AG04449 (cell line): ENCODE measurements at regions of chr11 and their contacts with region 1.

Region 1: GRCh38 chr11:44621140-44621681 is 55.7 kb downstream of the CD82 start:
- DNase-seq: no peak
- H3K4me3 ChIP-seq: peak overlapping the region; percentile 37
- CTCF ChIP-seq: peak; percentile 98

Region 2: DNA sequence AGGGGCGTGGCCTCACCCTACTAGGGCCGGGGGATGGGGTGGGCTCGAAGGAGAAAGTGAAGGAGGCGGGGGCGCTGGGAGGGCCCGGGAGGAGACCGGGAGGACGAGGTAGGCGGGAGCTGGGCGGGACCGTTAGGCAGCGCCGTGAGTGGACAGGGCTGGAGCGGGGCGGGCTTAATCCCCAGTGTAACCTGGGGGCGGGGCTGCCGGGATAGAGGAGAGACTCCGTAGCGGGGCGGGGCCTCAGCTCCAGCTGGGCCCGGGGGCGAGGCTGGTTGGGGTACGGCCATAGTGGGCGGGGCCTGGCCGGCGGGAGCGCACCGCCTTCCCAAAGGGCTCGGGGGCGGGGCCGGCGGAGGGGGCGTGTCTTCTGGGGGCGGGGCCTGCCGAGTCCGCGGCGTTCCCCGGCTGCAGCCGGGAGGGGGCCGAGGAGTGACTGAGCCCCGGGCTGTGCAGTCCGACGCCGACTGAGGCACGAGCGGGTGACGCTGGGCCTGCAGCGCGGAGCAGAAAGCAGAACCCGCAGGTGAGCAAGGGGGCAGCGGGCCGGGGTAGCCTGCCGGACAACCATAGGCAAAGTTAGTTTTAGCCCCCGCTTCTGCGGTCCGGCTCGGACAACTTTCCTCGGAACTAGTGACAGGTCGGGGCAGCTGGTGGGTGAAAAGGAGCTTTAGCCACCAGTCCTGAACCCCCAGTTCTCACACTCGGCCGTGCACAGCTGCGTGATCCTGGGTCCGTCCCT is 55.8 kb before region 1 on chr11 and contains the start of gene CD82:
- CTCF ChIA-PET with region 1: interaction called, 995 read pairs
- POLR2A ChIA-PET with region 1: no interaction called
- DNase-seq: peak; percentile 91
- H3K4me3 ChIP-seq: peak within 1 kb of the TSS; percentile 69
- CTCF ChIP-seq: peak; percentile 59

Region 3: GRCh38 chr11:44578279-44578678 is 42.9 kb before region 1 on chr11:
- CTCF ChIA-PET with region 1: interaction called, 18 read pairs
- POLR2A ChIA-PET with region 1: no interaction called
- DNase-seq: no peak
- H3K4me3 ChIP-seq: no peak overlapping the region
- CTCF ChIP-seq: no peak

Region 4: GRCh38 chr11:44601471-44602370 is 19.5 kb before region 1 on chr11:
- CTCF ChIA-PET with region 1: interaction called, 20 read pairs
- POLR2A ChIA-PET with region 1: no interaction called
- DNase-seq: no peak
- H3K4me3 ChIP-seq: no peak overlapping the region
- CTCF ChIP-seq: no peak

Region 5: GRCh38 chr11:44893846-44894617 is 272.8 kb after region 1 on chr11:
- CTCF ChIA-PET with region 1: interaction called, 659 read pairs
- POLR2A ChIA-PET with region 1: no interaction called
- DNase-seq: no peak
- H3K4me3 ChIP-seq: no peak overlapping the region
- CTCF ChIP-seq: peak; percentile 99

Region 6: DNA sequence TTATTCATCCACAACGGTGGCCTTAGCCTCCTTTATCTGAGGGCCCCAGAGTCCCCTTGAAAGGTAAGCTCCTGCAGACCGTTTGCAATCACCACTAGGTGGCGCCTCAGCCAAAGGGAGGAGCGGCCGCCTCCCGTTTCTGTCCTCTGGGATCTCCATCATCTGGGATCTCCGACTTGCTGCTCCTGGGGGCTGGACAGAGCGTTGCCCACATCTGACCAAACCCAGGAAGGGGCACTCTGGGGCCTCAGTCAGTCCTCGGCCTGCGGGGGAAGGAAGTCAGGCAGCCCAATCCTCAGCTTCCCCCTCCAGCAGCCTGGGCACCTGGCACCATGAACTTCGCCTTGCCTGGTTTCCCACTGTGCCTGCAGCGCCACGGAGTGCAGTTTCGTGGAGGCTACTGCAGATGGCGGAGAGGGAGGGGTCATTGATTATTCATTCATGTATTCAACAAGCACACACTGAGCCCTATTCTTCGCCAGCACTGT is 306.0 kb after region 1 on chr11:
- CTCF ChIA-PET with region 1: interaction called, 57 read pairs
- POLR2A ChIA-PET with region 1: no interaction called
- DNase-seq: no peak
- H3K4me3 ChIP-seq: no peak overlapping the region
- CTCF ChIP-seq: peak; percentile 89

Region 7: DNA sequence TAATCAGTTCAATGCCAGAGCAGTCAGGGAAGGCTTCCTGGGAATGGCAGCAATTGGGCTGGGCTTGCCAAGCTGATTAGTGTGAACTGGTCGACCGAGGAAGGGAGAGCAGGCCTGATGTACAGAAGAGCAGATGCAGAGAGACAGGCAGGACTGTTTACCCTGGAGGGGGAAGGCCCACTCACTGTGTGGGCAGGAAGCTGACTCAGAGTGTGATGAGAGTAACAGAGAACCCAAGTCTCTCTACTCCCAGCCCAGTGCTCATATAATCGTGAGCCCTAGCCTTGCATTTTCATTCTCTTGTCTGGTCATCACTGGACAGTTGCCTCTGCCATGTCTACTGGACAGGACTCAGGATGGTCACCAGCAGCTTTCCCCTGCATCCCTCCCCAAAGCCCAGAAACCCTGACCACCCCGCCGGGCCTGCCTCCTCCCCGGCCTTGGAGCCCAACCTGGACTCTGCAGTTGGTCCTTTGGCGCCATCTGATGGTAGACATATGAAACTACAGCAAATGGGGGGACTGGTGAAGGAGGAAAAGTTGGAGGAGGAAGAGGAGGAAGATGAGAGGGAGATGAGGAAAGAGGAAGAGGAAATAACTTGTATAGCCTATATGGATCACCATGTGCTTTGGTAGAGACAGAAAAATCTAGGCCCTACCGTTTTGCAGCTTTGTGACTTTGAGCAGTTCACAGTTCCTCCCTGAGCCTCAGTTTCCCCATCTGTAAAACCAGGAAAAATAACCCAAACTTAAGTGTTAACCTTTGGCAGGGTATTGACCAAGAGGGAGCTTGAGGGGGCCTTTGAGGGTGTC is 481.8 kb after region 1 on chr11:
- CTCF ChIA-PET with region 1: interaction called, 42 read pairs
- POLR2A ChIA-PET with region 1: no interaction called
- DNase-seq: no peak
- H3K4me3 ChIP-seq: peak overlapping the region; percentile 29; the same call in 1 of the 2 replicates
- CTCF ChIP-seq: peak; percentile 90

Region 8: GRCh38 chr11:45147017-45147728 is 526.0 kb after region 1 on chr11:
- CTCF ChIA-PET with region 1: no interaction called
- POLR2A ChIA-PET with region 1: no interaction called
- DNase-seq: peak; percentile 61
- H3K4me3 ChIP-seq: peak overlapping the region; percentile 77
- CTCF ChIP-seq: no peak